Breast epithelium (tissue), 4 donors: ENCODE measurements at regions of chr12 and their contacts with region 1.

Region 1: DNA sequence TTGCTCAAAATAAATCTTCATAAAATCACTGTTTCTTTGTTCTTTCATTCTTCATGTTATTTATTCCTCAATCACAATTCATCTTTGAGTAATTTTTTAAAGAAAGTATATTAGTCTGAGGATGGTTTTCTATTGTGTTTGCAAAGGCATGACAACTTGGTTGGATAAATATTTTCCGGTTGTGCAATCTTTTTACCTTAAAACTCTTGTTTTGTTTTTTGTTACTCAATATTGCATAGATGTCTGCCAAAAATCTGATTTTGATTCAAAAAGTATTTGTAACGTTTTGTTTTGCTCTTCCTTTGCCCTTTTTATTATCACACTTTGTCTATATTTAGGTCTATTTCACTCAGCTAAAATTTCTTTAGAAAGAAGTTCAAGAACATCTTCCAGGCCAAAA is 86.2 kb upstream of the SYT1 start:
- DNase-seq: no peak
- H3K4me3 ChIP-seq: no peak overlapping the region
- H3K27ac ChIP-seq: no peak overlapping the region
- H3K4me1 ChIP-seq: no peaks in the 10 kb centered on the region
- H3K27me3 ChIP-seq: no peaks in the 10 kb centered on the region
- CTCF ChIP-seq: no peak
- POLR2A ChIP-seq: no peak

Region 2: GRCh38 chr12:78359520-78359919 is 418.8 kb before region 1 on chr12:
- intact Hi-C with region 1: loop called (anchors 5 kb)
- DNase-seq: no peak
- H3K4me3 ChIP-seq: no peak overlapping the region
- H3K27ac ChIP-seq: no peak overlapping the region
- H3K4me1 ChIP-seq: no peaks in the 10 kb centered on the region
- H3K27me3 ChIP-seq: no peaks in the 10 kb centered on the region
- CTCF ChIP-seq: no peak
- POLR2A ChIP-seq: no peak

Region 3: GRCh38 chr12:78519422-78519821 is 258.9 kb before region 1 on chr12:
- intact Hi-C with region 1: no loop called
- DNase-seq: no peak
- H3K4me3 ChIP-seq: no peak overlapping the region
- H3K27ac ChIP-seq: no peak overlapping the region
- H3K4me1 ChIP-seq: no peaks in the 10 kb centered on the region
- H3K27me3 ChIP-seq: no peaks in the 10 kb centered on the region
- CTCF ChIP-seq: no peak
- POLR2A ChIP-seq: no peak

Region 4: GRCh38 chr12:78793491-78793890 is 15.2 kb after region 1 on chr12:
- intact Hi-C with region 1: no loop called
- DNase-seq: no peak
- H3K4me3 ChIP-seq: no peak overlapping the region
- H3K27ac ChIP-seq: no peak overlapping the region
- H3K4me1 ChIP-seq: no peaks in the 10 kb centered on the region
- H3K27me3 ChIP-seq: no peaks in the 10 kb centered on the region
- CTCF ChIP-seq: no peak
- POLR2A ChIP-seq: no peak